ENCODE measurements at regions of chr10 and their contacts with region 1.

Region 1: GRCh38 chr10:17228091-17228940 is at the start of gene VIM:
- DNase-seq: peak; percentile 79 to 95 (median 80)
- H3K4me3 ChIP-seq: peak within 1 kb of the TSS; percentile 82 to 91
- H3K4me3 Mint-ChIP-seq: peak within 1 kb of the TSS; percentile 88 to 99 (median 98)
- H3K27ac ChIP-seq: peak within 1 kb of the TSS; percentile 98
- H3K27ac Mint-ChIP-seq: peak within 1 kb of the TSS; percentile 96 to 100 (median 99)
- H3K4me1 ChIP-seq: peaks cover 48% of the 10 kb centered on the region
- H3K4me1 Mint-ChIP-seq: peaks cover 28 to 83% (median 52%) of the 10 kb centered on the region in 4 donors
- H3K27me3 ChIP-seq: no peaks in the 10 kb centered on the region
- H3K27me3 Mint-ChIP-seq: no peaks in the 10 kb centered on the region
- total RNA-seq, gene VIM: 657 to 677 TPM

Region 2: DNA sequence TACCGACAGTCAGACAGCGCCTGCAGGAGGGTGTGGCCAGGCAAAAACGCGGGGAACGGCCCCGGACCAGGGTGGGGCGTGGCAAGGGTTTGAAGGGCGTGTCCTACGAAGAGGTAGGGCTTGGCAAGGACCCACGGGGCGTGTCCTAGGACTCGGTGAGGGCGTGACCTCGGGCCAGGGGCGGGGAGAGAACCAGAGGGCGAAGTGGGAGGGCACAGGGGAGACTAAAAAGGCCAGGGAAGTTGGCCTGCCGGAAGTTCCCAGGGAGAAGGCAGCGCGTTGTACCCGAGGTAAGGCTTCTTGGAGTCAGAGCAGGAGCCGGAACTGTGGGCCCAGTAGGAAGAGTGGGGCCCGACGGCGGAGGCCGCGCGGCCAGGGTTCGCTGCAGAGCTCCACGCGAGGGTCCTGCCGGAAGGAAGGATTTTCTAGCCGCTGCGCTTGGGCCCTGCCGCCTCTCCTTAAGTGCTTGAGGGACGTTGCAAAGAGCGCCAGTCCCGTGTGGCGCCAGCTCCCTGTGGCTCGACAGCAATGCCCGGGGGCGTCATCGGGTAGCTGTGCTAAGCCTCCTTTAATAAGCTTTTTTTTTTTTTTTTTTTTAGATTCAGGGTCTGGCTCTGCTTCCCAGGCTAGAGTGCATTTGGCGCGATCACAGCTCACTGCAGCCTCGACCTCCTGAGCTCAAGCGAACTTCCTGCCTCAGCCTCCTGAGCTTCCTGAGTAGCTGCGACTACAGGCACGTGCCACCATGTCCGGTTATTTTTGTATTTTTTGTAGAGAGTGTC is 791.4 kb before region 1 on chr10 and contains the start of gene PTER:
- CTCF ChIA-PET with region 1: no interaction called
- POLR2A ChIA-PET with region 1: interaction called, 11 read pairs
- intact Hi-C with region 1: loop called (anchors 2 kb)
- DNase-seq: peak; percentile 94 to 96 (median 95)
- H3K4me3 ChIP-seq: peak within 1 kb of the TSS; percentile 63 to 65
- H3K4me3 Mint-ChIP-seq: peak within 1 kb of the TSS; percentile 88 to 97 (median 93)
- H3K27ac ChIP-seq: peak within 1 kb of the TSS; percentile 65
- H3K27ac Mint-ChIP-seq: peak within 1 kb of the TSS; percentile 85 to 96 (median 95)
- H3K4me1 ChIP-seq: peaks cover 52% of the 10 kb centered on the region
- H3K4me1 Mint-ChIP-seq: peaks cover 35 to 58% (median 48%) of the 10 kb centered on the region in 4 donors
- H3K27me3 ChIP-seq: no peaks in the 10 kb centered on the region
- H3K27me3 Mint-ChIP-seq: no peaks in the 10 kb centered on the region
- total RNA-seq, gene PTER: 24.1 to 26.5 TPM

Region 3: GRCh38 chr10:16843252-16843870 is 385.0 kb before region 1 on chr10:
- CTCF ChIA-PET with region 1: interaction called, 7 read pairs
- POLR2A ChIA-PET with region 1: interaction called, 5 read pairs
- intact Hi-C with region 1: loop called (anchors 1 kb)
- DNase-seq: peak in 4 of 5 donors; percentile 63 to 69 (median 67)
- H3K4me3 ChIP-seq: no peak overlapping the region
- H3K4me3 Mint-ChIP-seq: no peak overlapping the region
- H3K27ac ChIP-seq: no peak overlapping the region
- H3K27ac Mint-ChIP-seq: peak overlapping the region in 1 of 7 donors; percentile 31
- H3K4me1 ChIP-seq: no peaks in the 10 kb centered on the region
- H3K4me1 Mint-ChIP-seq: peaks cover 0 to 3% (median 0%) of the 10 kb centered on the region in 4 donors
- H3K27me3 ChIP-seq: no peaks in the 10 kb centered on the region
- H3K27me3 Mint-ChIP-seq: no peaks in the 10 kb centered on the region

Region 4: GRCh38 chr10:17023386-17024298 is 204.7 kb before region 1 on chr10:
- CTCF ChIA-PET with region 1: interaction called, 5 read pairs
- POLR2A ChIA-PET with region 1: interaction called, 98 read pairs
- intact Hi-C with region 1: loop called (anchors 1 kb)
- DNase-seq: peak; percentile 87 to 96 (median 91)
- H3K4me3 ChIP-seq: peak overlapping the region in 1 of 2 donors; percentile 4
- H3K4me3 Mint-ChIP-seq: peak overlapping the region; percentile 6 to 74 (median 54)
- H3K27ac ChIP-seq: peak overlapping the region; percentile 88
- H3K27ac Mint-ChIP-seq: peak overlapping the region; percentile 92 to 100 (median 99)
- H3K4me1 ChIP-seq: peaks cover 63% of the 10 kb centered on the region
- H3K4me1 Mint-ChIP-seq: peaks cover 46 to 76% (median 57%) of the 10 kb centered on the region in 4 donors
- H3K27me3 ChIP-seq: no peaks in the 10 kb centered on the region
- H3K27me3 Mint-ChIP-seq: no peaks in the 10 kb centered on the region

Region 5: GRCh38 chr10:17206210-17206709 is 22.1 kb before region 1 on chr10:
- CTCF ChIA-PET with region 1: interaction called, 60 read pairs
- POLR2A ChIA-PET with region 1: interaction called, 483 read pairs
- intact Hi-C with region 1: loop called (anchors 1 kb)
- DNase-seq: peak; percentile 55 to 86 (median 69)
- H3K4me3 ChIP-seq: no peak overlapping the region
- H3K4me3 Mint-ChIP-seq: peak overlapping the region in 7 of 8 donors; percentile 30 to 78 (median 57)
- H3K27ac ChIP-seq: peak overlapping the region; percentile 78
- H3K27ac Mint-ChIP-seq: peak overlapping the region; percentile 79 to 100 (median 97)
- H3K4me1 ChIP-seq: peaks cover 23% of the 10 kb centered on the region
- H3K4me1 Mint-ChIP-seq: peaks cover 9 to 45% (median 35%) of the 10 kb centered on the region in 4 donors
- H3K27me3 ChIP-seq: no peaks in the 10 kb centered on the region
- H3K27me3 Mint-ChIP-seq: no peaks in the 10 kb centered on the region

Region 6: DNA sequence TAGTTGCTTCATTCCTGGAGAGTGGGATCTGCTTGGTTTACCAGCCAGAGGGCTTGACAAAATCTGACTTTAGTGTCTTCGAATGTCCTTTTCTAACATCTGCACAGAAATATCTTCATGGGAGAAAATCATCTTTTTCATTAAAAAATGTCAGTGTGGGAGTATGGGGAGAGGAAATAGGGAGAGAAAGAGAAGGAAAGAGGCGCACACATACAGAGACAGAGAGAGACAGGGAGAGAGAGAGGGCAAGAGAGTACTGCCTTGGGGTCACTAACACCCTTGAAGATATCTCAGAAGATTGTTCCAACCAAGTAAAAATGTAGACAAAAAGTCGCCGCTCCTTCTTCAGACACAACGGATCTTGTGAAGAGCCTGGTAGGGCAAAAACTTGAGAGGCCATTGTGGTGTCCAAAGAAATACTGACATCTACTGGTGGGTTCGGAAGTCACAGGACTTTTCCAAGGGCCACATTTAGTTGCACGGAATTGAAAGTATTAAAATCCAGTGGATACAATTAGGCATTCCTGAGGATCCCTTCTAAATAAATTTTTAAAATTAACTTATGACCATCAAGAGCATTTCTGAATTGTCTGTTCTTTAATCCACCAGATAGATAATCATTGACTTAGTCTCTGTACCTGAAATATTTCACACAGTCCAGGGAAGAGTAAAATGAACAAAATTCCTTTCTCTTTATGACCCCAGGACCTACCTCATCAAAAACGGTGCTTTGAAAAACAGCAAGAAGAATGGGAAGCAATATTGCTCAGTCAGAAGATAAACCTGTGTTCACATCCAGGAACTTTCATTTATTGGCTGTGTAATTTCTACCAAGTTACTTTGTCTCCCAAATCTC is 29.4 kb after region 1 on chr10:
- CTCF ChIA-PET with region 1: interaction called, 6 read pairs
- POLR2A ChIA-PET with region 1: interaction called, 4 read pairs
- intact Hi-C with region 1: loop called (anchors 2 kb)
- DNase-seq: peak; percentile 49 to 71 (median 64)
- H3K4me3 ChIP-seq: no peak overlapping the region
- H3K4me3 Mint-ChIP-seq: peak overlapping the region in 1 of 8 donors; percentile 43
- H3K27ac ChIP-seq: no peak overlapping the region
- H3K27ac Mint-ChIP-seq: peak overlapping the region in 3 of 7 donors; percentile 0 to 84 (median 67)
- H3K4me1 ChIP-seq: no peaks in the 10 kb centered on the region
- H3K4me1 Mint-ChIP-seq: peaks cover 0 to 6% (median 4%) of the 10 kb centered on the region in 4 donors
- H3K27me3 ChIP-seq: no peaks in the 10 kb centered on the region
- H3K27me3 Mint-ChIP-seq: no peaks in the 10 kb centered on the region

Region 7: GRCh38 chr10:18651324-18652007 is 1423.2 kb after region 1 on chr10 and contains the start of gene NSUN6:
- CTCF ChIA-PET with region 1: no interaction called
- POLR2A ChIA-PET with region 1: no interaction called
- intact Hi-C with region 1: loop called (anchors 2 kb)
- DNase-seq: peak; percentile 94 to 95 (median 95)
- H3K4me3 ChIP-seq: peak within 1 kb of the TSS; percentile 77 to 88
- H3K4me3 Mint-ChIP-seq: peak within 1 kb of the TSS; percentile 93 to 99 (median 98)
- H3K27ac ChIP-seq: peak within 1 kb of the TSS; percentile 89
- H3K27ac Mint-ChIP-seq: peak within 1 kb of the TSS; percentile 96 to 100 (median 98)
- H3K4me1 ChIP-seq: peaks cover 39% of the 10 kb centered on the region
- H3K4me1 Mint-ChIP-seq: peaks cover 27 to 62% (median 36%) of the 10 kb centered on the region in 4 donors
- H3K27me3 ChIP-seq: no peaks in the 10 kb centered on the region
- H3K27me3 Mint-ChIP-seq: peaks cover 0 to 2% of the 10 kb centered on the region in 2 donors
- total RNA-seq, gene NSUN6: 41.6 to 43.4 TPM